Gastrocnemius medialis (tissue), 4 donors: ENCODE measurements at regions of chr15 and their contacts with region 1.

Region 1: GRCh38 chr15:68829068-68829467 is 8.4 kb upstream of the ANP32A start:
- DNase-seq: no peak
- ATAC-seq: peak; percentile 60 to 62
- H3K4me3 ChIP-seq: no peak overlapping the region
- H3K27ac ChIP-seq: no peak overlapping the region
- H3K4me1 ChIP-seq: no peaks in the 10 kb centered on the region
- H3K27me3 ChIP-seq: peaks cover 0 to 8% (median 7%) of the 10 kb centered on the region in 3 donors
- CTCF ChIP-seq: peak; percentile 8 to 61 (median 47)
- POLR2A ChIP-seq: no peak

Region 2: GRCh38 chr15:68730471-68730919 is 98.6 kb before region 1 on chr15:
- in situ Hi-C with region 1: no loop called
- intact Hi-C with region 1: loop called (anchors 5 kb)
- DNase-seq: peak in 1 of 2 donors; percentile 17
- ATAC-seq: peak in 1 of 2 donors; percentile 27
- H3K4me3 ChIP-seq: no peak overlapping the region
- H3K27ac ChIP-seq: peak overlapping the region; percentile 6 to 64 (median 34)
- H3K4me1 ChIP-seq: peaks cover 0 to 4% of the 10 kb centered on the region in 2 donors
- H3K27me3 ChIP-seq: no peaks in the 10 kb centered on the region
- CTCF ChIP-seq: peak; percentile 19 to 69 (median 56)
- POLR2A ChIP-seq: no peak

Region 3: GRCh38 chr15:68783226-68784058 is 45.6 kb before region 1 on chr15:
- in situ Hi-C with region 1: no loop called
- intact Hi-C with region 1: loop called (anchors 1 kb)
- DNase-seq: peak in 1 of 2 donors; percentile 38
- ATAC-seq: peak; percentile 36 to 53
- H3K4me3 ChIP-seq: no peak overlapping the region
- H3K27ac ChIP-seq: no peak overlapping the region
- H3K4me1 ChIP-seq: peaks cover 0 to 7% of the 10 kb centered on the region in 2 donors
- H3K27me3 ChIP-seq: no peaks in the 10 kb centered on the region
- CTCF ChIP-seq: peak; percentile 63 to 87 (median 78)
- POLR2A ChIP-seq: no peak